ENCODE measurements at regions of chr10 and their contacts with region 1.

Region 1: GRCh38 chr10:92567952-92568600 is 5.8 kb downstream of the IDE start:
- DNase-seq: no peak
- ATAC-seq: no peak
- H3K4me3 ChIP-seq: no peak overlapping the region
- H3K27ac ChIP-seq: no peak overlapping the region
- H3K4me1 ChIP-seq: peaks cover 0 to 38% (median 19%) of the 10 kb centered on the region in 9 donors
- H3K27me3 ChIP-seq: no peaks in the 10 kb centered on the region
- CTCF ChIP-seq: no peak

Region 2: GRCh38 chr10:92530421-92530820 is 37.7 kb before region 1 on chr10:
- intact Hi-C with region 1: loop called in 1 of 10 experiments (anchors 5 kb)
- DNase-seq: no peak
- ATAC-seq: no peak
- H3K4me3 ChIP-seq: no peak overlapping the region
- H3K27ac ChIP-seq: no peak overlapping the region
- H3K4me1 ChIP-seq: no peaks in the 10 kb centered on the region
- H3K27me3 ChIP-seq: no peaks in the 10 kb centered on the region
- CTCF ChIP-seq: no peak